ENCODE measurements at regions of chr12 and their contacts with region 1.

Region 1: DNA sequence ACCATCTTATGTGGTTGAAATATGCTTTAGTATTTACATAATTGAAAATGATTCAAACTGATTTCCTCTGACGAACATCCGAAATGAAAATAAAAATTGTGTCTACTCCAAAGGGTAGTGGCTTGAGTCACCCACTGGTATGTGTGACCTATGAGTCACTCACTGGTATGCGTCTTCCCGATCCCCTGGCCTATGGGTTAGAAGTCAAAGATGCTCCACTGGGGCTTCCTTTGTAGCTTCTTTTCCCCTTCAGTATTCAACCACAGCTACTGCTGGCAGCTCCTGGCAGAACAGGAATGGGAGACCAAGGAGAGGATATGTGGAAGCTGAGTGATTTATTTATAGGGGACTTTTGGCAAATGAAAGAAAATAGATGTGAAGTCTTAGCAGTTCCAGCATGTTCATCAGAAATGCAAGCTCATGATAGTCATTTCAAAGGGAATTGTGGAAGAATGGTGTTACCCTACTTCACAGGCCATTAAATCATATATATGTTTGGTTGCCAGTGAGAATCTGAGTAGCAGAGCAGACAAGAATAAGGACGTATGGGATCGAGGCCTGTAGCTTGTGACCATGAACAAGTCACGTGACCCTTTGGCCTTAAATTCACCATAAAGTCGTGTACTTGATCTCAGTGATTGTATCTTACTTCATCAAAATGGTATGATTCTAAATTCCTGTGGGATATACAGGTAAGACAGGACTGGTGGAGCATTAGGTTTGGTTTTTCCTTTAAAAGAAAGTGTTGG is 108.3 kb downstream of the CRADD start:
- DNase-seq: peak; percentile 72
- ATAC-seq: peak; percentile 76
- H3K4me3 Mint-ChIP-seq: peak overlapping the region; percentile 20
- H3K27ac Mint-ChIP-seq: peak overlapping the region; percentile 87
- H3K4me1 Mint-ChIP-seq: peaks cover 70% of the 10 kb centered on the region
- H3K27me3 Mint-ChIP-seq: no peaks in the 10 kb centered on the region

Region 2: GRCh38 chr12:93773122-93773871 is 12.1 kb before region 1 on chr12:
- CTCF ChIA-PET with region 1: interaction called, 7 read pairs
- POLR2A ChIA-PET with region 1: no interaction called
- intact Hi-C with region 1: loop called (anchors 1 kb)
- DNase-seq: peak; percentile 74
- ATAC-seq: peak; percentile 93
- H3K4me3 Mint-ChIP-seq: peak overlapping the region; percentile 56
- H3K27ac Mint-ChIP-seq: peak overlapping the region; percentile 59
- H3K4me1 Mint-ChIP-seq: peaks cover 45% of the 10 kb centered on the region
- H3K27me3 Mint-ChIP-seq: no peaks in the 10 kb centered on the region

Region 3: DNA sequence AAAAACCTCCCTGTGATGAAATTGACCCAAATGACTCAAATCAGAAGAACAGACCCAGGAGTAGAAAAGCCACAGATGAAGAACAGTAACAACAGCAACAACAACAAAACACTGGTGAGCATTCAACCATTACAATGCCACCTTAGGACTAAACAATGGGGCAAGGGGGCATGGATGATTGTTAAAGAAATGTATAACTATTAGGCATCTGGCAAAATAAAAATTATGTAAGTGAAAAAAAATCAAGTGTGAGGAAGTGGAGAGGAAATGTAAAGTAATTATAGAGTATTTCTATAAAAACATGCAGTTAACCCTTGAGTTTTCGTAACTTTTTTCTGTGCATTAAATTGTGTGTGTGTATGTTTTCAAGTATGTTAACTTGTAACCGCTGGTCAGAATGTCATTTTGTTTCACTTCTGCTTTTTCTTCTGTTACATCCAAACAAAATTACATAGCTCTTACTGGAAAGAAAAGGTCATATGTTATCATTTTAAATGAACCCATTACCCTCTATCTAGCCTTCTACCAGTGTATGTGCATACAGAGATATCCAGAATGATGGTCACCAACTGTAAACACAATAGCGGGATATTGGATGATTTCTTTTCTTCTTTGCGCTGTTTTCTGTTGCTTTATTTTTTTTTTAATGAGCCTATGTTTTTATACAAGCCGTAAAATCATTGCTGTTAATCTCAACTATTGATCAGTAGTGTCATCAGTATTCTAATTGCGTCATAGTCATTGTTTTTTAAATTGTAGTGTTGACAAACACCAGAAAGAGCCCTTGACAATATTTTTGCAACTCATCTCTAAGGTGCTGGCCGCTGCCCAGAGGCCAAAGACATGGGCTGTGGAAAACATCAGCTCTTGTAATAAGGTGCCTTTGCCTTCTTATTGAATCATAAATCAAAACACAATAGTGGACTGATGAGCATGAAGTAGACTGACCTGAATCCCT is 62.4 kb after region 1 on chr12:
- CTCF ChIA-PET with region 1: no interaction called
- POLR2A ChIA-PET with region 1: no interaction called
- intact Hi-C with region 1: loop called in 1 of 2 experiments (anchors 2 kb)
- DNase-seq: no peak
- ATAC-seq: no peak
- H3K4me3 Mint-ChIP-seq: no peak overlapping the region
- H3K27ac Mint-ChIP-seq: peak overlapping the region; percentile 8
- H3K4me1 Mint-ChIP-seq: peaks cover 28% of the 10 kb centered on the region
- H3K27me3 Mint-ChIP-seq: no peaks in the 10 kb centered on the region

Region 4: GRCh38 chr12:94459728-94460615 is 674.5 kb after region 1 on chr12 and contains the start of gene CEP83:
- CTCF ChIA-PET with region 1: no interaction called
- POLR2A ChIA-PET with region 1: no interaction called
- intact Hi-C with region 1: loop called in 1 of 2 experiments (anchors 10 kb)
- DNase-seq: peak; percentile 98
- ATAC-seq: peak; percentile 99
- H3K4me3 Mint-ChIP-seq: peak within 1 kb of the TSS; percentile 96
- H3K27ac Mint-ChIP-seq: peak within 1 kb of the TSS; percentile 95
- H3K4me1 Mint-ChIP-seq: peaks cover 30% of the 10 kb centered on the region
- H3K27me3 Mint-ChIP-seq: peaks cover 10% of the 10 kb centered on the region
- total RNA-seq, gene CEP83: 21.9 to 22.6 TPM